ENCODE measurements at regions of chr2 and their contacts with region 1.

Region 1: GRCh38 chr2:9897331-9897737 is 54.1 kb downstream of the TAF1B start:
- DNase-seq: peak; percentile 96
- ATAC-seq: peak; percentile 79
- H3K4me3 ChIP-seq: no peak overlapping the region
- H3K27ac ChIP-seq: peak overlapping the region; percentile 70; the same call in 1 of the 2 replicates
- H3K4me1 ChIP-seq: peaks cover 9% of the 10 kb centered on the region
- H3K27me3 ChIP-seq: no peaks in the 10 kb centered on the region
- CTCF ChIP-seq: no peak
- POLR2A ChIP-seq: no peak
- RAD21 ChIP-seq: no peak

Region 2: DNA sequence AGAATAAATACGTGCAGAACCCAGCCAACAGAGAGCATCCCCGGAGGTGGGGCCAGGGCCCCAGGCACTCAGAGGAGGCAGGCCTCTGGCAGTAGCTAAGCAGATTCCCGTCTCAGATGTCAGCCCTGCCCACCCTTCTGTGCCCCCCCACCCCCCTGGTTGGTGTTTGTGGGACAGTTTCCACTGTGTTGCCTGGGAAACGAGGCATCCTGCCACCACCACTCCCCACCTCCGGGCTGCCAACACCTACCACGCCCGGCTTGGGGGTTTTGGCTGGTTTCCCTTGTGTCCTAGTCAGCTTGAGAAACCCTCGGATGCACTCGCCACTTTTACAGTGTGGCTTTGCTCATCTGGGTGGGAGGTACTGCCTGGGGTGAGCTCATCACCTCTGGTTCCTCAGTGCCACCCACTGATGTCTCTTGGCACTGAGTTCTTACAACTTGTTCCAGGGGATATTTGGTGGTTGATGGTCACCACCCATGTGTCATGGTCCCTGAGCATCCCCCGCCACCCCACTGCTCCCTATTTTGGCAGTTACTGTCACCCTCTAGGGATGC is 194.2 kb before region 1 on chr2:
- CTCF ChIA-PET with region 1: no interaction called
- POLR2A ChIA-PET with region 1: no interaction called
- dilution Hi-C with region 1: no loop called
- in situ Hi-C with region 1: no loop called
- intact Hi-C with region 1: no loop called
- DNase-seq: peak; percentile 71
- ATAC-seq: peak; percentile 78
- H3K4me3 ChIP-seq: no peak overlapping the region
- H3K27ac ChIP-seq: peak overlapping the region; percentile 18; the same call in 1 of the 2 replicates
- H3K4me1 ChIP-seq: peaks cover 15% of the 10 kb centered on the region
- H3K27me3 ChIP-seq: no peaks in the 10 kb centered on the region
- CTCF ChIP-seq: no peak
- POLR2A ChIP-seq: no peak
- RAD21 ChIP-seq: peak; percentile 23; the same call in 1 of the 2 replicates

Region 3: DNA sequence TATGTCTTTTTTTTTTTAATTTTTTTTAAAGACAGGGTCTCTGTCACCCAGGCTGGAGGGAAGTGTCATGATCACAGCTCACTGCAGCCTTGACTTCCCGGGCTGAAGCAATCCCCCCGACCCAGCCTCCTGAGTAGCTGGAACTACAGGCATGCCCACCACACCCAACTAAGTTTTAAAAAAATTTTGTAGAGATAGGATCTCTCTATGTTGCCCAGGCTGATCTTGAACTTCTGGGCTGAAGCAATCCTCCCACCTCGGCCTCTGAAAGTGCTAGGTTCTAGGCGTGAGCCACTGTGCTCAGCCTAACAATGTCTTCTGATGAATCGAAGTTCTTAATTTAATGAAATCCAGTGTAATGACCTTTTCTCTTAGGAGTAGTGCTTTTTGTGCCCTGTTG is 58.0 kb before region 1 on chr2:
- CTCF ChIA-PET with region 1: interaction called, 10 read pairs
- POLR2A ChIA-PET with region 1: no interaction called
- dilution Hi-C with region 1: no loop called
- in situ Hi-C with region 1: no loop called
- intact Hi-C with region 1: no loop called
- DNase-seq: no peak
- ATAC-seq: no peak
- H3K4me3 ChIP-seq: no peak overlapping the region
- H3K27ac ChIP-seq: no peak overlapping the region
- H3K4me1 ChIP-seq: peaks cover 6% of the 10 kb centered on the region
- H3K27me3 ChIP-seq: no peaks in the 10 kb centered on the region
- CTCF ChIP-seq: no peak
- POLR2A ChIP-seq: no peak
- RAD21 ChIP-seq: no peak

Region 4: DNA sequence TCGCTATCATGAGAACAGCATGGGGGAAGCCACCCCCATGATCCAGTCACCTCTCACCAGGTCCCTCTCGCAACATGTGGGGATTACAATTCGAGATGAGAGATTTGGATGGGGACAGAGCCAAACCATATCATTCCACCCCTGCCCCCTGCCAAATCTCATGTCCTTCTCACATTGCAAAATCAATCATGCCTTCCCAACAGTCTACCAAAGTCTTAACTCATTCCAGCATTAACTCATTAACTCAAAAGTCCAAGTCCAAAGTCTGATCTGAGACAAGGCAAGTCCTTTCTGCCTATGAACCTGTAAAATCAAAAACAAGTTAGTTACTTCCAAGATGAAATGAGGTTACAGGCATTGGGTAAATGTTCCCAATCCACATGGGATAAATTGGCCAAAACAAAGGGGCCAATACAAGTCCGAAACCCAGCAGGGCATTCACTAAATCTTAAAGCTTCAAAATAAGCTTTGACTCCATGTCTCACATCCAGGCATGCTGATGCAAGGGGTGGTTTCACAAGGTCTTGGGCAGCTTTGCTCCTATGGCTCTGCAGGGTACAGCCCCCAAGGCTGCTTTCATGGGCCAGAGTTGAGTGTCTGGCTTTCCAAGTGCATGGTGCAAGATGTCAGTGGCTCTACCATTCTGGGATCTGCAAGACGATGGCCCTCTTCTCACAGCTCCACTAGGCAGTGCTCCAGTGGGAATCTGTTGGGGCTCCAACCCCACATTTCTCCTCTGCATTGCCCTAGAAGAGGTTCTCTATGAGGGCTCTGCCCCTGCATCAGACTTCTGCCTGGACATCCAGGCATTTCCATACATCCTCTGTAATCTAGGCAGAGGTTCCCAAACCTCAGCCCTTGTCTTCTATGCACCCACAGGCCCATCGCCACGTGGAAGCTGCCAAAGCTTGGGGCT is 39.3 kb before region 1 on chr2:
- CTCF ChIA-PET with region 1: no interaction called
- POLR2A ChIA-PET with region 1: no interaction called
- dilution Hi-C with region 1: no loop called
- in situ Hi-C with region 1: no loop called
- intact Hi-C with region 1: no loop called
- DNase-seq: no peak
- ATAC-seq: no peak
- H3K4me3 ChIP-seq: no peak overlapping the region
- H3K27ac ChIP-seq: no peak overlapping the region
- H3K4me1 ChIP-seq: no peaks in the 10 kb centered on the region
- H3K27me3 ChIP-seq: no peaks in the 10 kb centered on the region
- CTCF ChIP-seq: no peak
- POLR2A ChIP-seq: no peak
- RAD21 ChIP-seq: no peak